ENCODE measurements at regions of chr7 and their contacts with region 1.

Region 1: DNA sequence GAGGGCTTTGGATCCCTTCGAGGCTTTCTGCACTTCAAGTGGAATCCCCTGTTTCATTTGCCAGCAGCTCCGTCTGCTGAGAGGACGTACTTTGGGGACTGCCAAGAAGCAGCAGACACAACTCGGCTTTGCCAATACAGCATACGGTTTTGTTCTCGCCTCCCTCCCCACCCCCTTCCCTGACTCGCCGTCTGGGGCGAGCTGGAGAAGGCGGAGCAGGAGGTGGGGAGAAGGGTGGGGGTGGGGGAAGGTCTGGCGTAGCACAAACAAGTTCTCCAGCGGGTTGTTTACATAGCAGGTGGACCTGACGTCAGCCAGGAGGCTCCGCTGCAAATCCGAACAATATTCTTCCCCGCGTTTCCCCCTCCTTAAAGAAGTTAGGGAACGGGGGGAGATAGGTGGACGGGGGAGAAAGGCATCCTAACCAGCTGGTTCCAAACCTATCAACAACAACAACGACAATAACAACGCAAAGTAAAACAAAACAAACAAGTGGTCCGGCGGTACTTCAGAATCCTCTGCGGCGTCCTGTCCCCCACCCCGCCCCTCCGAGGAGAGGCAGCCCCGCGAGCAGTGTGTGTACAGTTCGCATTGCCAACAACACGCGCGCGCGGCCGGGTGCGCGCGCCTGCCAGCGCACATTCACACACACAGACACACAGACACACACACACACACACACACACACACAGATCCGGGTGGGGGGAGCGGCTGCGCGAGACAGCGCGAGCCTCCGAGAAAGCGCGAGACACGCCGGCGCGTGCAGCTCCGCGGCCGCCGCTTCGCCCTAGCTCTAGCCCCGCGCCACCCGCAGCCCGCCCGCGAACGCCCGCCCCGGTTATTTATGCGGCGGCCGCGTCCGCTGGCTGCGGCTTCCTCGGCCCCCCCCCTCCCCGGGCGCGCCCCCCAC is 167.0 kb upstream of the PPP1R3A start:
- DNase-seq: peak; percentile 80 to 93
- H3K4me3 ChIP-seq: peak overlapping the region; percentile 84 to 89
- H3K27ac ChIP-seq: peak overlapping the region; percentile 91 to 98
- H3K4me1 ChIP-seq: peaks cover 0 to 6% of the 10 kb centered on the region in 2 donors
- H3K27me3 ChIP-seq: no peaks in the 10 kb centered on the region
- CTCF ChIP-seq: no peak

Region 2: GRCh38 chr7:114026486-114027089 is 59.3 kb before region 1 on chr7:
- intact Hi-C with region 1: no loop called
- DNase-seq: no peak
- H3K4me3 ChIP-seq: no peak overlapping the region
- H3K27ac ChIP-seq: no peak overlapping the region
- H3K4me1 ChIP-seq: no peaks in the 10 kb centered on the region
- H3K27me3 ChIP-seq: no peaks in the 10 kb centered on the region
- CTCF ChIP-seq: peak; percentile 28 to 71 (median 60)

Region 3: DNA sequence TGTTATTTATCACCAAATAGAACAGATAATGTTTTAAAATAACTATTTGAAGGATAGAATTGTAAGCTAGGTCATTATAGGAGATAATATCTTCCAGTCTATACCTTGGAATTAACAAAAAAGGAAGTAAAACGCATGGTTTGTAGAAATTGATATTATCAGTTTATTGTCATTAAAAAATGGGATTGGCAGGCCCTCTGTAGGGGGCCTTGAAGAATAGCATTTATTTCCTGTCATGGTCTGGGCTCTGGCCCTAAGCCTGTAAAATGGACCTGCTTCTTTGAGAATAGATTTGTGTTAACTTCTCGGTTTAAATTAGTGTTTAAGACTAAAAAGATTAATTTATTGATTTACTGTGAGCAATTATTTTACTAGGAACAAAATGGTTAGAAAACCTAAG is 131.2 kb after region 1 on chr7:
- intact Hi-C with region 1: loop called (anchors 5 kb)
- DNase-seq: no peak
- H3K4me3 ChIP-seq: no peak overlapping the region
- H3K27ac ChIP-seq: no peak overlapping the region
- H3K4me1 ChIP-seq: peaks cover 0 to 8% of the 10 kb centered on the region in 2 donors
- H3K27me3 ChIP-seq: no peaks in the 10 kb centered on the region
- CTCF ChIP-seq: no peak

Region 4: DNA sequence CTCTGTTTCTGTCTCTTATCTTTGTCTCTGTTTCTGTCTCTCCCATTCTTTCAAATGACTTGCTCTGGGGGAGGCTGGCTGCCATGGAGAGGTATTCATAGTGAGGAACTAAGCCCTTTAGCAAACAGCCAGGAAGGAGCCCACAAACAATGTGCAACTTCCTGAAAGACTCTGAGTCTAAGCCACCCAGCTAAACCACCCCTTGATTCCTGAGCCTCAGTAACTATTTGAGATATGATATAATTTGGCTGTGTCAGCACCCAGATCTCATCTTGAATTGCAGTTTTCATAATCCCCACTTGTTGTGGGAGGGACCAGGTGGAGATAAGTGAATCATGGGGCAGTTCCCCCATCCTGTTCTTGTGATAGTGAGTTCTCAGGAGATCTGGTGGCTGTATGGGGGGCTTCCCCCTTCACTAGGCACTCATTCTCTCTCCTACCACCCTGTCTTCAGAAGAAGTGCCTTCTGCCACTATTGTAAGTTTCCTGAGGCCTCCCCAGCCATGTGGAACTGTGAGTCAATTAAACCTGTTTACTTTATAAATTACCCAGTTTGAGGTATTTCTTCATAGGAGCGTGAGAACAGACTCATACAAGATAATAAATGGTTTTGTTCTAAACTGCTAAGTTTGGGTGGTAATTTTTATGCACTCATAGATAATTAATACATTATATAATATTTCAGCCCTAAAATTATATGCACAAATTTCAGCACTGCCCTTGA is 207.6 kb after region 1 on chr7:
- intact Hi-C with region 1: no loop called
- DNase-seq: no peak
- H3K4me3 ChIP-seq: no peak overlapping the region
- H3K27ac ChIP-seq: no peak overlapping the region
- H3K4me1 ChIP-seq: peaks cover 0 to 5% of the 10 kb centered on the region in 2 donors
- H3K27me3 ChIP-seq: no peaks in the 10 kb centered on the region
- CTCF ChIP-seq: no peak

Region 5: DNA sequence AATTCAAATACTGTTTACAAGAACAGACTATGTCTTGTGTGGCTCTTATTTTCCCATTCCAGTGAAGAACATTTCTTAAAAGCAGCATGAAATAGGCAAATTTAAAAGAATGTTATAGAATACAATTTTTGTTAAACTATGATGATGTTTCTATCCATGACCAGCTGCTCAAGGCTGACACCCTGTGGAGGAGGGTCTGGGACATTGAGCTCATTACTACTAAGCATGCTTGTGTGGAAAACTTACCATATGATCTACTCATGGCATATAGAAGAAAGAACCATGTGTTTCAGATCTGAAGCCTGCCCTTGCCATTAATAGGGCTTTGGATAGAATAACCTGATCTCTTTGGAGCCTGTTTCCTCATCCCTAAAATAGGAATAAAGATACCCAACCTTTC is 453.7 kb after region 1 on chr7:
- intact Hi-C with region 1: loop called (anchors 2 kb)
- DNase-seq: no peak
- H3K4me3 ChIP-seq: no peak overlapping the region
- H3K27ac ChIP-seq: no peak overlapping the region
- H3K4me1 ChIP-seq: peaks cover 0 to 2% of the 10 kb centered on the region in 2 donors
- H3K27me3 ChIP-seq: no peaks in the 10 kb centered on the region
- CTCF ChIP-seq: peak in 2 of 3 experiments; percentile 24 to 33

Region 6: GRCh38 chr7:114922016-114922651 is 836.3 kb after region 1 on chr7 and contains the start of gene MDFIC:
- intact Hi-C with region 1: loop called (anchors 5 kb)
- DNase-seq: peak; percentile 10 to 79
- H3K4me3 ChIP-seq: peak within 1 kb of the TSS; percentile 76 to 83
- H3K27ac ChIP-seq: peak within 1 kb of the TSS; percentile 91 to 95
- H3K4me1 ChIP-seq: peaks cover 4 to 13% of the 10 kb centered on the region in 2 donors
- H3K27me3 ChIP-seq: no peaks in the 10 kb centered on the region
- CTCF ChIP-seq: peak in 1 of 3 experiments; percentile 17
- total RNA-seq, gene MDFIC: 13.3 TPM

Measured in ascending aorta (tissue), 2 donors.